ENCODE measurements at regions of chr1 and their contacts with region 1.

Region 1: DNA sequence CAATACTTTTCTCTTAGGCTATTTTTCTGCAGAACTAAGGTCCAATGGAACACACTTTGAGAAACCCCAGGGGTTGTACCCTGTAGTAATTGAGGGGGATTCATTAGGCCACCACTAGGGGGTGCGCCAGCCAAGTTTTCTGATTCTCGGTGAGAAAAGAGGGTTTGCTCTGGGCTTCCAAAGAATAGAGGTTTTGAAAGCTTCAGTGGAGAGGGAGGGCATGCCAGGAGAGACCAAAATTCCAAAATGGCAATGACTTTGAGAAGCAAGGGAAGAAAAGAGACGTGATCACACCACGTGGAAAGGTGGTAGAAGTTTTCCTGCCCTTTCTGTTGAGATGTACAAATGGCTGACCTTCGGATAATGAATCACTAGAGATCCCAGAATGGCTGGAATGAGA is 323.3 kb downstream of the RPS6KC1 start:
- DNase-seq: peak; percentile 73
- ATAC-seq: peak; percentile 11; the same call in 1 of the 3 replicates
- H3K4me3 ChIP-seq: no peak overlapping the region
- H3K27ac ChIP-seq: peak overlapping the region; percentile 50
- H3K4me1 ChIP-seq: peaks cover 98% of the 10 kb centered on the region
- H3K27me3 ChIP-seq: no peaks in the 10 kb centered on the region
- CTCF ChIP-seq: peak; percentile 82
- EP300 ChIP-seq: no peak
- POLR2A ChIP-seq: no peak
- RAD21 ChIP-seq: peak; percentile 85

Region 2: GRCh38 chr1:213244664-213245091 is 129.7 kb before region 1 on chr1:
- CTCF ChIA-PET with region 1: no interaction called
- POLR2A ChIA-PET with region 1: interaction called, 3 read pairs
- in situ Hi-C with region 1: no loop called
- intact Hi-C with region 1: loop called (anchors 1 kb)
- DNase-seq: peak; percentile 73
- ATAC-seq: peak; percentile 54
- H3K4me3 ChIP-seq: no peak overlapping the region
- H3K27ac ChIP-seq: no peak overlapping the region
- H3K4me1 ChIP-seq: peaks cover 19% of the 10 kb centered on the region
- H3K27me3 ChIP-seq: no peaks in the 10 kb centered on the region
- CTCF ChIP-seq: peak; percentile 79
- EP300 ChIP-seq: no peak
- POLR2A ChIP-seq: no peak
- RAD21 ChIP-seq: peak; percentile 82

Region 3: DNA sequence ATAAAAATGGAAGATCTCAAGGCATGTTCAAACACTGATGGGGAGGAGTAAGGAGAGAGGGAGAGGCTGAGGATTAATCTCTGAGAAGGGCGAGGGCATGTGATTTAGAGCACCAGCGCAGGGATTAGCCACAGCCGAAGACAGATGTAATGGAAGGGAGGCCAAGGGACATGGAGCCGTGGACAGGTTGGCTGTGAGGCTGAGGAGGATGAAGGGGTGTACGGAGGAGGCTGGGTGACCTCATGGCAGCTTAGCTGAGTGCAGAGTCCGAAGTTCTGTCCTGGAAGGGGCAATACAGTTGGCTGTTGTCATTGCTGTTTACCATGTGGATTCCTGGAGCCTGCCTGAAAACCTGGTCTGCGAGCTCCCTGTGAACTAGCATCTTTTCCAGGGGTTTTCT is 19.5 kb after region 1 on chr1:
- CTCF ChIA-PET with region 1: no interaction called
- POLR2A ChIA-PET with region 1: interaction called, 12 read pairs
- in situ Hi-C with region 1: no loop called
- intact Hi-C with region 1: no loop called
- DNase-seq: peak; percentile 78
- ATAC-seq: peak; percentile 92
- H3K4me3 ChIP-seq: no peak overlapping the region
- H3K27ac ChIP-seq: peak overlapping the region; percentile 44
- H3K4me1 ChIP-seq: peaks cover 100% of the 10 kb centered on the region
- H3K27me3 ChIP-seq: no peaks in the 10 kb centered on the region
- CTCF ChIP-seq: no peak
- EP300 ChIP-seq: peak in 1 of 2 experiments; percentile 62; a peak in 1 of 4 replicates
- POLR2A ChIP-seq: no peak
- RAD21 ChIP-seq: no peak

Region 4: DNA sequence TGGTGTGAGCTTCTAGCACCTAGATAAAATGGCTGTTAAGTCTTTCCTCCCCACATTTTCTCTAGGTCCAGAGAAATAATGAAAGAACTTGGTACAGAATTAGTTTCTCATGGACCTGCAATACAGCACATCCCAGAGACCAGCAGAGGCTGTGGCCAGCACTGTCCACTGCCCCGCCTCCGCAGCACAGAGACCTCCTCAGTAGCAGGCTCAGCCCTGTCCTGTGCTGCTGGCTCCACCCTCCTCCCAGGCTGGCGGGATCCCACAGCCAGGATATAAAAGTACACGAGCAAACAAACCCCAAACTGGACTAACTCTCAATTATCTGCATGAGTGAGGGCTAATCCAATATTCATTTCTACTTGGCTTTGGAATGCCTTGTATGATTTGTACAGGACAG is 78.1 kb after region 1 on chr1:
- CTCF ChIA-PET with region 1: no interaction called
- POLR2A ChIA-PET with region 1: no interaction called
- in situ Hi-C with region 1: no loop called
- intact Hi-C with region 1: no loop called
- DNase-seq: no peak
- ATAC-seq: peak; percentile 55; the same call in 1 of the 3 replicates
- H3K4me3 ChIP-seq: no peak overlapping the region
- H3K27ac ChIP-seq: no peak overlapping the region
- H3K4me1 ChIP-seq: peaks cover 12% of the 10 kb centered on the region; the same call in 1 of the 2 replicates
- H3K27me3 ChIP-seq: peaks cover 0 to 2% of the 10 kb centered on the region in 2 experiments; a peak in 3 of 5 replicates
- CTCF ChIP-seq: no peak
- EP300 ChIP-seq: no peak
- POLR2A ChIP-seq: no peak
- RAD21 ChIP-seq: no peak

Region 5: GRCh38 chr1:213564215-213564659 is 189.9 kb after region 1 on chr1:
- CTCF ChIA-PET with region 1: no interaction called
- POLR2A ChIA-PET with region 1: interaction called, 11 read pairs
- in situ Hi-C with region 1: loop called (anchors 5 kb)
- intact Hi-C with region 1: loop called (anchors 2 kb)
- DNase-seq: peak; percentile 79
- ATAC-seq: peak; percentile 71
- H3K4me3 ChIP-seq: no peak overlapping the region
- H3K27ac ChIP-seq: peak overlapping the region; percentile 38
- H3K4me1 ChIP-seq: peaks cover 30% of the 10 kb centered on the region
- H3K27me3 ChIP-seq: no peaks in the 10 kb centered on the region
- CTCF ChIP-seq: peak; percentile 62
- EP300 ChIP-seq: peak in 1 of 2 experiments; percentile 31; a peak in 1 of 4 replicates
- POLR2A ChIP-seq: no peak
- RAD21 ChIP-seq: peak; percentile 77

Region 6: DNA sequence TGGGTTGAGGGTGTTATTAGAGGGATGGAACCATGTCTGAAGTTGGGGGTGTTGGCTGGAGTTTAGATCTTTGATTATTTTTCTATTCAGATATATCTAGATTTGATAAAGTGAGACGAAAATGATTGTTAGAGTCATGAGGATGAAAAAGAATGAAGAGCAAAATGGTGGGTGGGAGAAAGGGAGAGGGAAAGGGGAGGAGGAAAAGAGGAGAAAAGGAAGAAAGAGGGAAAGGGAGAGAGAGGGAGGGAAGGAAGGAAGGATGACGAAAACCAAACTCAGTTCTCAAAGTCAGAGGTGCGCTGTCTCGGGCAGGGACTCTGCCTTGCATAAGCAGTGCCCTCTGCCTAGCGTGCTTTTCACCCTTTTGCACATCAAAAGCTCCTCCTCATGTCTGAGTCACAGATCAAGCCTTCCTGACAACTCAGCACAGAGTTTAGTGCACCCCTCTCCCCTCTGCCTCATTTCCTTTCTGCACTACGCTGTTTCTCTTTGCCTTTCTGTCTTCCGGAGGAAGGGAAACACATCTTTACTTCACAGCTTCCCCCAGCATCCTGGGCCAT is 387.6 kb after region 1 on chr1:
- CTCF ChIA-PET with region 1: no interaction called
- POLR2A ChIA-PET with region 1: interaction called, 5 read pairs
- in situ Hi-C with region 1: no loop called
- intact Hi-C with region 1: loop called (anchors 10 kb)
- DNase-seq: peak; percentile 42
- ATAC-seq: no peak; the same call in 2 of the 3 replicates
- H3K4me3 ChIP-seq: no peak overlapping the region
- H3K27ac ChIP-seq: no peak overlapping the region
- H3K4me1 ChIP-seq: peaks cover 36% of the 10 kb centered on the region
- H3K27me3 ChIP-seq: no peaks in the 10 kb centered on the region
- CTCF ChIP-seq: no peak
- EP300 ChIP-seq: no peak
- POLR2A ChIP-seq: no peak
- RAD21 ChIP-seq: no peak

Region 7: GRCh38 chr1:213987927-213988506 is 613.6 kb after region 1 on chr1 and contains the start of gene PROX1:
- CTCF ChIA-PET with region 1: no interaction called
- POLR2A ChIA-PET with region 1: interaction called, 36 read pairs
- in situ Hi-C with region 1: loop called (anchors 10 kb)
- intact Hi-C with region 1: loop called (anchors 1 kb)
- DNase-seq: no peak
- ATAC-seq: peak; percentile 69
- H3K4me3 ChIP-seq: peak within 1 kb of the TSS; percentile 82 to 94 (median 84)
- H3K27ac ChIP-seq: peak within 1 kb of the TSS; percentile 72
- H3K4me1 ChIP-seq: peaks cover 59% of the 10 kb centered on the region
- H3K27me3 ChIP-seq: no peaks in the 10 kb centered on the region; a peak in 1 of 5 replicates
- CTCF ChIP-seq: no peak
- EP300 ChIP-seq: no peak
- POLR2A ChIP-seq: peak; percentile 77 to 79
- RAD21 ChIP-seq: 0 out of 2 replicates have a peak, but pooled peaks have one; percentile 23
- total RNA-seq, gene PROX1: 30.2 and 48.5 TPM in 2 replicates